Transverse colon (tissue), 4 donors: ENCODE measurements at regions of chr4 and their contacts with region 1.

Region 1: DNA sequence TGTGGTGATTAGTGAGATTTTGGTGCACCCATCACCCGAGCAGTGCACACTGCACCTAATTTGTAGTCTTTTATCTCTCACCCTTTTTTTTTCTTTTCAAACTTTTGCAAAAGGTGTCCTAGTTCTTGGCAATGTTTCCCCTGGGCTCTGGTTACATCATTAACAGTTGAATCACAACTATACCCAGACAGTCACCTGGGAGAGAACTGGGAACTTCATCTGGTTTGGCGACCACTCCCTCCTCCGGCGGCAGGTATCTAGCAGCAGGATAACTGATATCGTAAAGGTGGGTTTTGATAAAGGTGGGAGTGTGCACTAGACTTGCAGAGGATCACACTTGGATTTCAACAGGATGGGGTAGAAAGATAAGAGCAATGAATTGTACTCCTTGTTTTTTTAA is 140.5 kb downstream of the CHIC2 start:
- DNase-seq: no peak
- H3K4me3 ChIP-seq: no peak overlapping the region
- H3K27ac ChIP-seq: no peak overlapping the region
- H3K4me1 ChIP-seq: no peaks in the 10 kb centered on the region
- H3K27me3 ChIP-seq: peaks cover 11% of the 10 kb centered on the region
- CTCF ChIP-seq: no peak
- EP300 ChIP-seq: no peak
- POLR2A ChIP-seq: no peak

Region 2: GRCh38 chr4:53821179-53821851 is 102.6 kb before region 1 on chr4:
- in situ Hi-C with region 1: no loop called
- intact Hi-C with region 1: no loop called
- DNase-seq: no peak
- H3K4me3 ChIP-seq: no peak overlapping the region
- H3K27ac ChIP-seq: no peak overlapping the region
- H3K4me1 ChIP-seq: peaks cover 0 to 14% (median 0%) of the 10 kb centered on the region in 4 donors
- H3K27me3 ChIP-seq: no peaks in the 10 kb centered on the region
- CTCF ChIP-seq: no peak
- EP300 ChIP-seq: no peak
- POLR2A ChIP-seq: no peak

Region 3: GRCh38 chr4:53942712-53943111 is 18.8 kb after region 1 on chr4:
- in situ Hi-C with region 1: no loop called
- intact Hi-C with region 1: loop called (anchors 1 kb)
- DNase-seq: no peak
- H3K4me3 ChIP-seq: no peak overlapping the region
- H3K27ac ChIP-seq: no peak overlapping the region
- H3K4me1 ChIP-seq: peaks cover 0 to 3% (median 0%) of the 10 kb centered on the region in 4 donors
- H3K27me3 ChIP-seq: no peaks in the 10 kb centered on the region
- CTCF ChIP-seq: no peak
- EP300 ChIP-seq: no peak
- POLR2A ChIP-seq: no peak